CD4-positive, alpha-beta T cell (primary cell): ENCODE measurements at regions of chr15 and their contacts with region 1.

Region 1: GRCh38 chr15:31344823-31345605 is 18.4 kb downstream of the KLF13 start:
- DNase-seq: peak in 3 of 14 experiments; percentile 46 to 50 (median 47)
- ATAC-seq: no peak
- H3K4me3 ChIP-seq: peak overlapping the region; percentile 47
- H3K4me3 Mint-ChIP-seq: peak overlapping the region; percentile 90
- H3K27ac ChIP-seq: peak overlapping the region; percentile 81 to 86
- H3K27ac Mint-ChIP-seq: peak overlapping the region; percentile 90
- H3K4me1 ChIP-seq: peaks cover 100% of the 10 kb centered on the region
- H3K4me1 Mint-ChIP-seq: peaks cover 100% of the 10 kb centered on the region
- H3K27me3 ChIP-seq: no peaks in the 10 kb centered on the region
- H3K27me3 Mint-ChIP-seq: no peaks in the 10 kb centered on the region
- CTCF ChIP-seq: no peak

Region 2: GRCh38 chr15:31332020-31332680 is 12.9 kb before region 1 on chr15:
- CTCF ChIA-PET with region 1: interaction called, 3 read pairs
- POLR2A ChIA-PET with region 1: interaction called, 566 read pairs
- intact Hi-C with region 1: loop called (anchors 2 kb)
- DNase-seq: no peak
- ATAC-seq: no peak
- H3K4me3 ChIP-seq: peak overlapping the region; percentile 84
- H3K4me3 Mint-ChIP-seq: peak overlapping the region; percentile 93
- H3K27ac ChIP-seq: peak overlapping the region; percentile 18 to 37
- H3K27ac Mint-ChIP-seq: peak overlapping the region; percentile 97
- H3K4me1 ChIP-seq: peaks cover 84% of the 10 kb centered on the region
- H3K4me1 Mint-ChIP-seq: peaks cover 86% of the 10 kb centered on the region
- H3K27me3 ChIP-seq: no peaks in the 10 kb centered on the region
- H3K27me3 Mint-ChIP-seq: no peaks in the 10 kb centered on the region
- CTCF ChIP-seq: no peak

Region 3: DNA sequence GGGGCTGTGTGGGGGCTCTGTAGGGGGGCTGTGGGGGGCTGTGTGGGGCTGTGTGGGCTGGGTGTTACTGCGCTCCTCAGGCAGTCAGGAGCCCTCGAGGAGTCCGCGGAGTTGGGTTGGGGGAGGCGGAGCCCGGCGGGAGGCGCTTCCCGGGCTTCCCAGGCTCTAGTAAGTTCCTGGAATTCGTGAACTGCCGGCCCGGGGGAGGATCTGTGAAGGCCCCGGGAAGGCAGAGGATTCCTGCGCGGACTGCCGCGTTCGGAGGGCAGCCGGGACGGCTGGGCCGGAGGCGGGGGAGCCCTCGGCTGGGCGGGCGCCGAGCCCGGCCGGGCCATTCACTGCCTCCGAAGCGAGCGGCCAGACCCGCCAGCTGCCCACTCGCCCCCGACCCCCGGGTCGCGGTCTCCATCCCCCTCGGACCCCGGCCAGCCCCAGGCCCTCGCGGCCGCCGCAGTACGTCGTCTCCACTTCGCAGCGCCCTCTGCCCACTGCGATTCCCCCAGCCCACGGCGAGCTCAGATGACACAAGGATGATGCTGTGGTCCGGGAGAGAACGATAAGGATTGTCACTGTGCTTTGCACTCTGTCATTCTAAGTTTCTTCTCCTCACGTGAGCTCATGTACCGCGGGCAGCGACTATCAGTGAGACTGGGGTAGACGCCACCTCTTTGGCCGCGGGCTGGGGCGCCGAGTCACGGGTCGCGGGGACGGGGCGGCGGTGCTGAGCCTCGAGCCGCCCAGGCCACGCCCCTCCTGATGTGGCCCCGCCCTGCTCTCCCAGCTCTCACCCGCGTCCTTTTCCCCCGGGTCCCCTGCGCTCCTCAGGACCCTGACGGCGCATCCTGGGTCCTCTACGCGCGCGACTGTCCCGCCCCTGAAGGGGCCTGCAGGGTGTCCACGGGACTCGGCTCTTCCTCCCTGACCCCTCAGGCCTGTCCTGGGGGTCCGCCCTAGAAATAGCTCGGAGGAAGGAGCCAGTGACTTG is 47.0 kb after region 1 on chr15:
- CTCF ChIA-PET with region 1: interaction called, 3 read pairs
- POLR2A ChIA-PET with region 1: interaction called, 5 read pairs
- intact Hi-C with region 1: loop called in 1 of 2 experiments (anchors 5 kb)
- DNase-seq: peak; percentile 65 to 93 (median 82)
- ATAC-seq: peak; percentile 87
- H3K4me3 ChIP-seq: peak overlapping the region; percentile 75
- H3K4me3 Mint-ChIP-seq: peak overlapping the region; percentile 95
- H3K27ac ChIP-seq: peak overlapping the region; percentile 8 to 37
- H3K27ac Mint-ChIP-seq: peak overlapping the region; percentile 86
- H3K4me1 ChIP-seq: peaks cover 51% of the 10 kb centered on the region
- H3K4me1 Mint-ChIP-seq: peaks cover 52% of the 10 kb centered on the region
- H3K27me3 ChIP-seq: no peaks in the 10 kb centered on the region
- H3K27me3 Mint-ChIP-seq: no peaks in the 10 kb centered on the region
- CTCF ChIP-seq: no peak

Region 4: DNA sequence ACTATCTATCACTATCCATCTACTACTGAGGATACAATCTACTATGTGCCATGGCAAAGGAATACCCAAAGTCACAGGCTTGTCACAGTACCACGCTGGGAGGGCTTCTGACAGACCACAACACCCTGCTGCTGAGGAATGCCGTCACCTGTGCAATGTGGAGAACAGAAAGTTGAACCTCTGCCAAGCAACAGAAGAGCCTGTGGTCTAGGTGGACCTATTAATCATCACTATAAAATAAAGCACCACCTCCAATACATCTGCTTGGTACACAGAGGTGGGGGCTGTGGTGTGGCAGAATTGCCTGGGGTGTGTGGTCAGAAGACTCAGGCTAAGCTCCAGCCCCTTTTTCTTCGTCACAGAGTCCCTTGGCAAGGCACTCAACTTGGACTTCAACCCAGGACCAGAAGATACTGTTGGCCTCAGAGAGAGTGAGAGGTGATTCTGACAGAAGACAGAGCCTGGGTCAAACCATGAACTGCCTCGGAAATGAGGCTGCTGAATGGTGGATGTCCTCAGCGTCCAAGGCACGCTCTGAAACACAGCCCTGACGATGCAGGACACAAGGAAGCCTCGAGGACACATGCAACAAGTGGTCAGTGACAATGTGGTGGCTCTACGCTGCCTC is 495.9 kb after region 1 on chr15:
- CTCF ChIA-PET with region 1: no interaction called
- POLR2A ChIA-PET with region 1: no interaction called
- intact Hi-C with region 1: no loop called
- DNase-seq: no peak
- ATAC-seq: no peak
- H3K4me3 ChIP-seq: no peak overlapping the region
- H3K4me3 Mint-ChIP-seq: no peak overlapping the region
- H3K27ac ChIP-seq: no peak overlapping the region
- H3K27ac Mint-ChIP-seq: no peak overlapping the region
- H3K4me1 ChIP-seq: no peaks in the 10 kb centered on the region
- H3K4me1 Mint-ChIP-seq: no peaks in the 10 kb centered on the region
- H3K27me3 ChIP-seq: peaks cover 0 to 8% of the 10 kb centered on the region in 2 experiments
- H3K27me3 Mint-ChIP-seq: peaks cover 6% of the 10 kb centered on the region
- CTCF ChIP-seq: no peak